ENCODE measurements at regions of chr14 and their contacts with region 1.

Region 1: DNA sequence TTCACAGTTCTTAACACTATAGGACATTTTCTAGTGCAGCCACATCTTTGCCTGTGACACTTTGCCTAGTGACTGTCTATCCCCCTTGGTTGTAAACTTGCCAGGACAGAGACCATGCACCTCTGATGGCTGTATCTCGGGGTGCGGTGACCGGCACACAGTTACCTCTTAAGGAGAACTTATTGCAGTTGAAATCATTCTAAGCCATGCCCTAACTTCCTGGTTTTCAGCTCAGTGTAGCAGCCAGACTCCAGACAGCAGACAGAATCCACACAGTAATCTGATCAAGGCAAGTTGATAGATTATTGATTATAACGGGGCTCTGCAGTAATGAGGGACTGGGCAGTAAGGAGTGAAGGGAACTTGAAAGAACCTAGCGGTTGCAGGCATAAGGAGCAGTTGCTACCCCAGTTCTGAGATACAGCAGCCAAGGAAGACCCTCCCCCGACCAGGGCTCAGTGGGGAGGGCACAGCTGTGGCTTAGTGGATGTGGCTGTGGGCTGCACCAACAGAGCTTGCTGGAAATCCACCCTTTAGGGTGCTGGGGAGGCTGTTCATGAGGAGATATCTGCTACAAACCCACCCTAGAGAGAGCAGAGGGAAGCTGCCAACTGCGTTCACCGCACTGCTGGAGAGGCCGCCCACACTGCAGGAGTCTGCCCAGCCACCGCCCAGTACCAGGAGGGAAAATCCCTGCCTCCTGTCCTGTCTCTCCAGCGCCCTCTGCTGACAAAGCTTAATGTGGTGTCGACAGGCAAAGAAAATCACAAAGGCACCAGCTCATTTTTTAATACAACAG is 58.2 kb upstream of the BEGAIN start:
- DNase-seq: peak; percentile 65 to 84 (median 81)
- ATAC-seq: peak; percentile 97
- H3K4me3 ChIP-seq: no peak overlapping the region
- H3K4me3 Mint-ChIP-seq: peak overlapping the region; percentile 1 to 77 (median 22)
- H3K27ac ChIP-seq: no peak overlapping the region
- H3K27ac Mint-ChIP-seq: peak overlapping the region; percentile 21 to 80 (median 66)
- H3K4me1 ChIP-seq: peaks cover 31% of the 10 kb centered on the region in 2 donors
- H3K4me1 Mint-ChIP-seq: peaks cover 33 to 57% (median 54%) of the 10 kb centered on the region in 7 donors
- H3K27me3 ChIP-seq: no peaks in the 10 kb centered on the region
- H3K27me3 Mint-ChIP-seq: peaks cover 0 to 23% (median 0%) of the 10 kb centered on the region in 5 donors

Region 2: DNA sequence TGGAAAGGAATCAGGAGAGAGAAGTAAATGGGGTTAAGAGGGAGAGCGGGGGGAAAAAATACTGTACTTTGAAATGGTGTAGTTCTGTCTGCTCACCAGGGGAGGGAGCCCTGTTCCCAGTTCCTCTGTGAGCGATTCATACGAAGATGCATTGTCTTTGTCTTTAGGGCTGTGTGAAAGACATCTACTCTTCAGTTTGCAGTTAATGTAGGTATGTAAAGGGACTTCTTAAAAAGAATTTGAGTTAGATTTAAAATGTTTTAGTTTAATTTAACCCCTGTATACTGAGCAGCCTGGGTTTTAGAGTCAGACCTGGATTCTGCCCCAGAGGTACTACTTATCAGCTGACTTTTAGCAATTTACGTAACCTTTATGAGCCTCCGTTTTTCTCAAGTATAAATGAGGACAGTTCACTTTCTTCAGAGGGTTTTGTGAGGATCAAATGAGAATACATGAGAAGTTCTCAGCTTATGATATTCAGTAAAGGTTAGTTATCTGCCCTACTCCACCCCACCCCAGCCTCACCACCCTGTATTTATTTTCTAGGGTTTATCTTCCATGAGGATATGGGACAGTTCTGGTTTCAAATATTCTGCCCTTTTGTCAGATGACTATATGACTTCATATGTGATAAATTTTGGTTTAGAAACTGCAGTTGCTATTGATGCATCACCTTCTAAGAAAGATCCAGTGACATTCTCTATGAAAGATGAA is 662.7 kb before region 1 on chr14:
- CTCF ChIA-PET with region 1: no interaction called
- POLR2A ChIA-PET with region 1: no interaction called
- intact Hi-C with region 1: loop called in 1 of 2 experiments (anchors 5 kb)
- DNase-seq: peak; percentile 35 to 77 (median 72)
- ATAC-seq: peak; percentile 100
- H3K4me3 ChIP-seq: no peak overlapping the region
- H3K4me3 Mint-ChIP-seq: no peak overlapping the region
- H3K27ac ChIP-seq: no peak overlapping the region
- H3K27ac Mint-ChIP-seq: peak overlapping the region in 6 of 9 donors; percentile 3 to 85 (median 68)
- H3K4me1 ChIP-seq: peaks cover 0 to 15% of the 10 kb centered on the region in 2 donors
- H3K4me1 Mint-ChIP-seq: peaks cover 5 to 21% (median 19%) of the 10 kb centered on the region in 7 donors
- H3K27me3 ChIP-seq: no peaks in the 10 kb centered on the region
- H3K27me3 Mint-ChIP-seq: no peaks in the 10 kb centered on the region

Region 3: DNA sequence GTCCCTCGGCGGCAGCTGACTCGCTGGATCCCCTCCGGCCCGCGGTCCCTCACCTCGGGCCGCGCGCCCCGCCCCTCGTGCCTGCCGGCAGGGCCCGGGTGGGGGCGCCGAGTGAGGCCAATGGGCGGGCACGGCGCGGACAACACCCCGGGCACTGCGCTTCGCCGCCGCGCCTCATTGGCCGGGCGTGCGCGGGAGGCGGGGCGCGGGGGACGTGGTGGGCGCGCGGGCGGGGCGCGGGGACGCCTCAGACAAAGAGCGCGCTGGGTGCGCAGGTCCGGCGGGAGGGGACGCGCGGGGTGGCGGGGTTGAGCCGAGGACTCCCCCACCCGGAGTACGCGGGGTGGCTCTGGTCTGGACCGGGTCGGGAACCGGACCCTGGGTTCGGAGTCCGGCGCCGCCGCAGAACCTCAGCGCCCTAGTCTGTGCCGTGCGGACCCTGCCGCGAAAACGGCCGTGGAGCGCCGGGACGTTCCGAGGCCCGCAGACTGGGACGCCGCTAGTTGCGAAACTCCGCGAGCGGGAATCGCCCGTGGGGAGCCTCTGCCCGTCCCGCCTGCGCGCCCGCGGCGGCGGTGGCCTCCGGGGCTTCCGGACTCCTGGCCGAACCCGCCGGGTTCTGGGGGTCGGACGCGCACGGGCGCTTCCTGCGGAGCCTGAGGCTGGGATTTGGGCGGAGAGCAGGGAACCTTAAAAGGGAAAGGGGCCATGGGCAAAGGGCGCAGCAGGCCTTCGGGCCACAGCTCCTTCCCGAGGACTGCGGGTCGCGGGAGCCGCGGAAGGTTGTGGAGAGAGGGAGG is 338.8 kb before region 1 on chr14 and contains the start of gene SLC25A29:
- CTCF ChIA-PET with region 1: no interaction called
- POLR2A ChIA-PET with region 1: no interaction called
- intact Hi-C with region 1: loop called in 1 of 2 experiments (anchors 10 kb)
- DNase-seq: peak; percentile 26 to 87 (median 39)
- ATAC-seq: peak; percentile 93
- H3K4me3 ChIP-seq: peak within 1 kb of the TSS; percentile 59
- H3K4me3 Mint-ChIP-seq: peak within 1 kb of the TSS; percentile 83 to 95 (median 88)
- H3K27ac ChIP-seq: peak within 1 kb of the TSS; percentile 51
- H3K27ac Mint-ChIP-seq: peak within 1 kb of the TSS in 4 of 9 donors; percentile 49 to 81 (median 56)
- H3K4me1 ChIP-seq: peaks cover 4 to 7% of the 10 kb centered on the region in 2 donors
- H3K4me1 Mint-ChIP-seq: peaks cover 0 to 24% (median 10%) of the 10 kb centered on the region in 7 donors
- H3K27me3 ChIP-seq: no peaks in the 10 kb centered on the region
- H3K27me3 Mint-ChIP-seq: peaks cover 0 to 39% (median 0%) of the 10 kb centered on the region in 5 donors
- total RNA-seq, gene SLC25A29: 5.9 to 25.6 (median 10.4) TPM

Region 4: DNA sequence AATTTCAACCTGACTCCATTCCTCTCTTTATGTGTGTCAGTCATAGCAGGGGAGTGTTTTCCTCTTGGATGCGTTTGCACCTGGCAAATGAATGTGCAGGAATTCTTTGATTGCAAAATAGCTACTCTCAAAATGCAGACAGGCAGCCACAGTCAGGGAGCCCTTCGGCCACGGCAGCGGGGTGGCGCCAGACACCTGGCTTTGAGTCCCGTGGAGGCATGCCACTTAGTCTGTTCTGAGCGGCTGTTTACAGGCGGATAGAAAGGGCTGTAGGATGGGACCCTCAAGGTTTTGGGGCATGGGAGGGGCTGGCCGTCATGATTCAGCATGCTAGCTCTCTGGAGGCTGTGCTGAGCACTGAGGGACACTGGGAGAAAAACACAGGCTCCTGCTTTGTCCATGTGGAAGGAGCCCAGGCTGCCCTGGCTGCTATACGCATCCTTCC is 205.2 kb before region 1 on chr14:
- CTCF ChIA-PET with region 1: interaction called, 30 read pairs
- POLR2A ChIA-PET with region 1: interaction called, 3 read pairs
- intact Hi-C with region 1: loop called in 1 of 2 experiments (anchors 2 kb)
- DNase-seq: peak in 7 of 9 donors; percentile 5 to 66 (median 30)
- ATAC-seq: peak; percentile 26
- H3K4me3 ChIP-seq: no peak overlapping the region
- H3K4me3 Mint-ChIP-seq: no peak overlapping the region
- H3K27ac ChIP-seq: no peak overlapping the region
- H3K27ac Mint-ChIP-seq: peak overlapping the region in 2 of 9 donors; percentile 62 to 63
- H3K4me1 ChIP-seq: no peaks in the 10 kb centered on the region
- H3K4me1 Mint-ChIP-seq: peaks cover 3 to 38% (median 18%) of the 10 kb centered on the region in 7 donors
- H3K27me3 ChIP-seq: no peaks in the 10 kb centered on the region
- H3K27me3 Mint-ChIP-seq: no peaks in the 10 kb centered on the region

Region 5: DNA sequence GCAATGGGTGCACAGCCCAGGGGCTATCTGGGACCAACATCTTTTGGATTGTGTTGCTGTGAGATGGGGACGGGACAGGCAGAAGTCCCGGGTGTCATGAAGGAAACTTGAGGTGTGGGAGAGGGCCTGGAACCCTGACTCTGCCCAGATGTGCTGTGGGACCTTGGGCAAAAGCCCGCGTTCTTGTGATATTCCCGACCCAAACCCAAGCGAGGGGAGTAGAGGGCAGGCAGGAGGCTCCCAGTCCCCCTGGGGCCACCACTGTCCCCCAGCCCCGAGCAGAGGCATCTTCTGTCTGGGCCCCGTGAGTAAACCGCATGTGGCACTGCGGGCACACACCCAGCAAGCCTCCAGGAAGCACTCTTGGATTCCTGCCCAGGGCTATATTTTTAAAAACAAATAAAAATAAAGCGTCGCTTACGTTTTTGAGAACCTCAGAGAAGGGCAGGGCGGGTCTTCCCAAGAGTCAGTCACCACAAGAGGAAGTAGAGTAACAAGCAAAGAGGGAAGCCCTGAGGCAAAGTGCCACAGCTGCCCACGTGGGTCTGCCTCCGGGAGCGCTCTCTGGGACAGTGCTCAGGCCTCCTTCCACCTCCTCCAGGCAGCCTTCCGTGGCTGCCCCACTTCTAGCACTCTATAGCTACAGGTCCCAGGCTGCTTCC is 97.6 kb before region 1 on chr14:
- CTCF ChIA-PET with region 1: interaction called, 3 read pairs
- POLR2A ChIA-PET with region 1: interaction called, 12 read pairs
- intact Hi-C with region 1: loop called (anchors 1 to 2 kb)
- DNase-seq: peak in 6 of 9 donors; percentile 43 to 90 (median 79)
- ATAC-seq: peak; percentile 76
- H3K4me3 ChIP-seq: peak overlapping the region; percentile 50
- H3K4me3 Mint-ChIP-seq: peak overlapping the region; percentile 51 to 87 (median 82)
- H3K27ac ChIP-seq: peak overlapping the region; percentile 73
- H3K27ac Mint-ChIP-seq: peak overlapping the region; percentile 58 to 98 (median 89)
- H3K4me1 ChIP-seq: peaks cover 27 to 28% of the 10 kb centered on the region in 2 donors
- H3K4me1 Mint-ChIP-seq: peaks cover 9 to 38% (median 22%) of the 10 kb centered on the region in 7 donors
- H3K27me3 ChIP-seq: no peaks in the 10 kb centered on the region
- H3K27me3 Mint-ChIP-seq: no peaks in the 10 kb centered on the region

Region 6: DNA sequence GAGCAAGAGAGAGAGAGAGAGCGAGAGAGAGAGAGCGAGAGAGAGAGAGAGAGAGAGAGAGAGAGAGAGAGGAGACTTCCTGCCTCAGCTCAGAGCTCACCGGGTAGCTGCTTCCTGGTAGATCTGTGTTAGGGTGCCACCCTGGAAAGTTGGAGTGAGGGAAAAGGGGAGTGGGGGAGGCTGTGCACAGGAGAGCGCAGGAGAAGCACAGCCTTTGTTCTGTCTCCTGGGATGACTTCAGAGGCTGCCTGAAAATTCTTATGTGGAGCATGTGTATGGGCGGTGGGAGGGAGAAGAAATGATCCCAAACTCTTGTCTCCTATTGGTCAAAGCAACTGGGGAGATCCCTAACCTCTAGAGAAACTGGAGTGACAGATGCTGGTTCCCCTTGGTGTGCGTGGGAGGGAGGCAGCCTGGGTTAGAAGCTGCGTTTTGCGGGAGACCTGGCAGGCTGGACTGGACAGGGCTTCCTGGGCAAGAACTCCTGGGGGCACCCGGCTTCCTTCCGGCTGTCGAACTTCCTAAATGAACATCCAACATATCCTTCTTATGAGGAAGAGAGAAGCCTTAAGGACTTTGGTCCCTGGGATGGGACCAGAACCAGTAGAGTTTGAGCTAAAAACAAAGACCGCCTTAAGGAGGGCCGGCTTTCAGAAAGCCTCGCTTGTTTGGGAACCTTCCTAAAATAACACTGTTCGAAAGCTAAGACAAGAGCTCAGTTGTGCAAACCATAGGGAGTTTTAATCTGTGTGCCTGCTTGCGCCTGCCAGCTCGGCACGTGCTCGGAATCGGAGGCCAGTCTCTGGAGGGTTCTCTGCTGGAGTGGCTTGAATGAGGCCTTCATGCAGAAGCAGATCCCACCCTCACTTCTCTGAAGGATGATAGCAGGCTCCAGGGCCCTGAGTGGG is 27.7 kb before region 1 on chr14:
- CTCF ChIA-PET with region 1: interaction called, 9 read pairs
- POLR2A ChIA-PET with region 1: interaction called, 3 read pairs
- intact Hi-C with region 1: loop called in 1 of 2 experiments (anchors 1 kb)
- DNase-seq: peak in 5 of 9 donors; percentile 32 to 56 (median 52)
- ATAC-seq: no peak
- H3K4me3 ChIP-seq: no peak overlapping the region
- H3K4me3 Mint-ChIP-seq: peak overlapping the region; percentile 13 to 81 (median 66)
- H3K27ac ChIP-seq: no peak overlapping the region
- H3K27ac Mint-ChIP-seq: peak overlapping the region; percentile 49 to 97 (median 81)
- H3K4me1 ChIP-seq: peaks cover 10 to 26% of the 10 kb centered on the region in 2 donors
- H3K4me1 Mint-ChIP-seq: peaks cover 18 to 28% (median 25%) of the 10 kb centered on the region in 7 donors
- H3K27me3 ChIP-seq: no peaks in the 10 kb centered on the region
- H3K27me3 Mint-ChIP-seq: peaks cover 0 to 16% (median 3%) of the 10 kb centered on the region in 5 donors